Common myeloid progenitor, CD34-positive (primary cell): ENCODE measurements at regions of chr19 and their contacts with region 1.

Region 1: DNA sequence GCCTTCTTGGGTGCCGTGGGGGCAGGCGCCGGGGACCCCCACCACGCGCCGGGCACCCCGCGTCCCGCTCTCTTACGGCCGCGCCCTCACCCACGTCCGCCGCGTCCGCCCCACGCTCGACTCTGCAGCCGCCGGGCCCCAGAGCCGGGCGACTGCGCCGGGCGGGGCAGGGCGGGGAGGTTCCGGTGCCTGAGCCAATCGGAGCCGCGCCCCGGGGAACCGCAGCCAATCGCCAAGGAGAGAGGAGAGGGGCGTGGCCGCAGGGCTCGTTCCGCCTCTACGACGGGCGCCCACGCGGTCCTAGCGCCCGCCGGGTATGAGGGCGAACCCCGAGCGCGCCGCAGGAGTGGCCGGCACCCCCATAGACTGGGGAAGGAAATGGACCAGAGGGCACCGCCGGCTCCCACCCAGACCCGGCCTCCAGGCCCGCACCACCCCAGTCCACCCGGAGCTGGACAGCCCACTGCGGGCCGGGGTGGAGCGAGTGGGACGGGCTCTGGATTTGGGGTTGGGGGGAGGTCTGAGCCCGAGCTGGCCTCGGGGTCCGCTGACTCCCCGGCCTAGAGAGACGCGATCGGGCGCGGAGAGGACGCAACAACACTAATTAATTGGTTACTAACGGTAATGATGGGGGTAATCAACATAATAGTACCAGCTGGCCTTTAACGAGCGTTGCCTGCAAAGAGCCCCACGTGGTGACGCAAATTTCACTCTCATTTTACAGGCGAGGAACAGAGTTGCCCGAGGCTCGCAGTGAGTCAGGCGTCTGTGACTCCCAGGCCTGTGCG is at the start of gene MFSD12:
- DNase-seq: peak; percentile 92 to 96 (median 95)
- H3K4me3 ChIP-seq: peak within 1 kb of the TSS; percentile 62 to 97 (median 87)
- H3K27ac ChIP-seq: peak within 1 kb of the TSS in 1 of 2 experiments; percentile 74
- H3K4me1 ChIP-seq: peaks cover 6 to 60% (median 49%) of the 10 kb centered on the region in 4 experiments
- H3K27me3 ChIP-seq: no peaks in the 10 kb centered on the region

Region 2: GRCh38 chr19:3544742-3545668 is 12.7 kb before region 1 on chr19:
- CTCF ChIA-PET with region 1: interaction called, 25 read pairs
- POLR2A ChIA-PET with region 1: no interaction called
- DNase-seq: peak in 2 of 3 donors; percentile 50 to 64
- H3K4me3 ChIP-seq: no peak overlapping the region
- H3K27ac ChIP-seq: no peak overlapping the region
- H3K4me1 ChIP-seq: peaks cover 0 to 13% (median 1%) of the 10 kb centered on the region in 4 experiments
- H3K27me3 ChIP-seq: no peaks in the 10 kb centered on the region

Region 3: GRCh38 chr19:3606690-3607289 is 49.1 kb after region 1 on chr19 and contains the start of gene TBXA2R:
- CTCF ChIA-PET with region 1: interaction called, 13 read pairs
- POLR2A ChIA-PET with region 1: no interaction called
- DNase-seq: peak in 2 of 3 donors; percentile 45 to 53
- H3K4me3 ChIP-seq: peak within 1 kb of the TSS; percentile 37 to 81 (median 72)
- H3K27ac ChIP-seq: peak within 1 kb of the TSS in 1 of 2 experiments; percentile 56
- H3K4me1 ChIP-seq: peaks cover 11 to 65% (median 63%) of the 10 kb centered on the region in 4 experiments
- H3K27me3 ChIP-seq: no peaks in the 10 kb centered on the region